Mammary epithelial cell (primary cell): ENCODE measurements at regions of chr6 and their contacts with region 1.

Region 1: DNA sequence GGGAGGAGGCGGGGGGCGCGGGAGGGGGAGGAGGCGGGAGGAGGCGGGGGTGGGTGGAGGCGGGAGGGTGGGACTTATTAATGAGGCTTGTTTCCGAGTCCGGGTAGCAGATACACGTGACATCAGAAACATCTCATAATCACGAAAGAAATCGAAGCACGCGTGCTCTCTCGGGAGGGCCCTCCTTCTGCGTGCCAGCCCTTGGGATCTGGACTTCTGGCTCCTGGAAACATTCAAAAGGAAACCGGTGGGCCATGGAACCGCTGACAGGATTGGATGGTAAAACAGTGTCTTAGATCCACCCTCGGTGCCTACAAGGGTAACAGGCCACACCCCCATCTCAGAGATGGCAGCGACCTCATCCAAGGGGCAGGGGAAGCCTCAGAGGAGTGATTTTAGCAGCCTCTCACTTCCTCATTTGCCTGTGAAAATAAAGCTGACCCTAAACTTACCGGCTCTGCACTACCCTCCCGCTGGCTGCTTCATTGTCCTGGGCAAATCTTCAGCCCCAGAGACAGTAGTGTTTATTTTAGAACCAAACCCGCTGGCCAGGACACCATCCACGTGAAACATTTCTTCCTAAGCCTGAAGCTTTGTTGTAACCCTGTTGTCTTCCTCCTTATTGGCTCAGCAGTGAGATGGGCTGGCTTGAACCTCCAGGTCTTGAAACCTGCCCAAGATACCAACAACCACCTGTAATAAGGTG is 97.5 kb downstream of the PSMG4 start:
- DNase-seq: no peak
- H3K4me3 ChIP-seq: peak overlapping the region in 1 of 3 experiments; percentile 10
- H3K27ac ChIP-seq: no peak overlapping the region
- H3K4me1 ChIP-seq: peaks cover 37% of the 10 kb centered on the region
- H3K27me3 ChIP-seq: no peaks in the 10 kb centered on the region
- CTCF ChIP-seq: no peak

Region 2: DNA sequence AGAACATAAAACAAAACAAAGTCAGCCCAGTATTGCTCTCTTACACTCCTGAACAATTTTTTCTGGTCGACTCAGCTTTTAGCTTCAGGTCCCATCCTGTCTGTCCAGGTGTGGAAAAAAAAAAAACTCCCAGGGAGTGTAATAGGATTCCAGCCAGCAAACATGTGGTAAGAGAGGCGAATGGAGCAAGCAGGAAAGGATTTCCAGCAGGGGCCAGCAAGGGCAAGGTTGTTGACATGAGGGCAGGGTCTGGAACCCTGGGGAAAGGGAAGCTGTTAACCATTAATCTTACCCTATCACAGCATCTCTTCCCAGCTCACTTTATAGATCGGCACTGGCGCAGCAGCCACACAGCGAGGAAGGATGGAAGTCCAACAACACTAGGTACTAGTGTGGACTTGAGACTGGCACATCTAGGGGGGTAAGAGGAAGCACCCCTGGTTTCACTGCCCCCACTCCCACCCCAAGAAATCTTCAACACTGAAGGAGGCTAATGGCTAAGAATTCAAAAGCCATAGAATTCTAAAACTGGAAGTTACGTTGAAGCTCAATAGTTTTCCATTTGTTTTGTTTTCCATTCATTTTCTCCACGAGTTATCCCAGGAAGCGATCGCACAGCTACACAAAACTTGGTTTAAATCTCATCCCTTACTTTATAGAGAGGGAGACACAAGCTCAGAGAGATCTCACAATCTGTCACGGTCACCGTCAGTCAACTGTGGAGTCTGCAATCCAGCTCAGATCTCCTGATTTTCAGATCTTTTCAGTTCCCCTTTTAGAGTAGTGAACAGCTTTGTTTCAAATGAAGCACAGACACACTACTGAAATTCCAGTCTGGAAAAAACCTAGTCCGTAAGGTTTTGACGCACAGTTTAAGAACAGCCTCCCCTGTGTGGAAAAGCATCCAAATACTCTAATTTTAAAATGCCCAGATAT is 47.3 kb after region 1 on chr6:
- CTCF ChIA-PET with region 1: no interaction called
- dilution Hi-C with region 1: no loop called
- in situ Hi-C with region 1: no loop called
- intact Hi-C with region 1: loop called (anchors 5 kb)
- DNase-seq: peak; percentile 81
- H3K4me3 ChIP-seq: no peak overlapping the region
- H3K27ac ChIP-seq: peak overlapping the region; percentile 85
- H3K4me1 ChIP-seq: peaks cover 33% of the 10 kb centered on the region
- H3K27me3 ChIP-seq: no peaks in the 10 kb centered on the region
- CTCF ChIP-seq: no peak

Region 3: DNA sequence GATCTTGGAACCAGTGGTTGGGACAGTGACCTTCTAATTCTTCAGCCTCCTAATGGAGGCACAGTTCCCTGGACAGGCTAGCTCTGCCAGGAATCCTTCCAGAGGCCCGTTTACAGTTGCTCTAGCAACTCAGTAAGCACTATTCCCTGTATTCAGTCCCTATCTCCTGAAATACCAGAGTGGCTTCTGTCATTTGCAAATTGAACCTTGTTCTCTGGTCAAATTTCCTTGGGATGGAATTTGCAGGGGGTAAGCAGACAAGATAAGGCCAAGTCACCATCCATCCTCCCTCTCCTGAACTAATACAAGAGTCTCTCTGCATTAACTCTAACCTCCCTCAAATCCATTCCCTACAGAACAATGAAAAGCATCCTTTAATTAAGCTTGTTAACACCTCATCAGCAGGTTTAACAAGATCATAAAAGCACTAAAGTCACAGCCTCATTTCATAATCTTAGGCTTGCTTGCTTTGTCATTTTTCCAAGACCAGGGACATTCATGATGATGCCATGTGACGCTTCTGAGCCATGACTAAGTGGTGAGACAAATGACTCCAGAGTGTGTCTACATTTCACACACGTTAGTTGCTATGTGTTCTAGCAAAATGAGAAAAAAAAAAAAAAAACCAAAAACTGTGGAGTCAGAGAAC is 63.5 kb after region 1 on chr6:
- CTCF ChIA-PET with region 1: no interaction called
- dilution Hi-C with region 1: loop called (anchors 5 kb)
- in situ Hi-C with region 1: no loop called
- intact Hi-C with region 1: no loop called
- DNase-seq: peak; percentile 79
- H3K4me3 ChIP-seq: no peak overlapping the region
- H3K27ac ChIP-seq: no peak overlapping the region
- H3K4me1 ChIP-seq: peaks cover 27% of the 10 kb centered on the region
- H3K27me3 ChIP-seq: no peaks in the 10 kb centered on the region
- CTCF ChIP-seq: no peak